ENCODE measurements at regions of chr12 and their contacts with region 1.

Region 1: DNA sequence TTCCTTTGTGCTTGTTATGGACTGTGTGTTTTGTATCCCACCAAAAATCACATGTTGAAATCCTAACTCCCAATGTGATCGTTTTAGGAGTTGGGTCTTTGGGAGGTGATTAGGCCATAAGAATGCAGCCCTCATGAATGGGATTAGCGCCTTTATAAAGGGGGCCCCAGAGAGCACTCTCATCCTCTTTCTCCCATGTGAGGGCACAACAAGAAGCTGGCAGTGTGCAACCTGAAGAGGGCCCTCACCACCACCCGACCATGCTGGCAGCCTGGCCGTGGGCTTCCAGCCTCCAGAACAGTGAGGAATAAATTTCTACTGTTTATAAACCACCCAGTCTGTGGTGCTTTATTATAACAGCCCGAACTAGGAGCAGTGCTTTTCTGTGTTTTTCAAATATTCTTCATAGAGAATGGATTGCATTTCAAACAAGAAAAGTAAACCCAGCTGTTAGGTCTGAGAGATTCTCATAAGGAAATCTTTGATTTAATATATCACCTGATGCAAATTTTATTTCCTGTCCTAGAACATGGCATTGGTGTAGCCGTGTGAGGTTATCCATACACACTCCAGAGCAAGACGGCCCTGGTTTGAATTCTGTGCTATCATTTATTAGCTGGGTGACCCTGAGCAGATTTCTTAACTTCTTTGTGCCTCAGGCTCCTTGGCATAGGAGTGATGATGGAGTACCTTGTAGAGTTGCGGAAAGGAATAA is 27.8 kb downstream of the HSPB8 start:
- DNase-seq: no peak
- H3K4me3 ChIP-seq: no peak overlapping the region
- H3K27ac ChIP-seq: no peak overlapping the region
- H3K4me1 ChIP-seq: no peaks in the 10 kb centered on the region
- H3K27me3 ChIP-seq: peaks cover 59% of the 10 kb centered on the region
- CTCF ChIP-seq: no peak

Region 2: GRCh38 chr12:119340578-119340977 is 134.1 kb after region 1 on chr12:
- CTCF ChIA-PET with region 1: interaction called, 13 read pairs
- POLR2A ChIA-PET with region 1: no interaction called
- intact Hi-C with region 1: no loop called
- DNase-seq: no peak
- H3K4me3 ChIP-seq: no peak overlapping the region
- H3K27ac ChIP-seq: no peak overlapping the region
- H3K4me1 ChIP-seq: no peaks in the 10 kb centered on the region
- H3K27me3 ChIP-seq: peaks cover 53% of the 10 kb centered on the region
- CTCF ChIP-seq: no peak